Vagina (tissue), 2 donors: ENCODE measurements at regions of chr6 and their contacts with region 1.

Region 1: DNA sequence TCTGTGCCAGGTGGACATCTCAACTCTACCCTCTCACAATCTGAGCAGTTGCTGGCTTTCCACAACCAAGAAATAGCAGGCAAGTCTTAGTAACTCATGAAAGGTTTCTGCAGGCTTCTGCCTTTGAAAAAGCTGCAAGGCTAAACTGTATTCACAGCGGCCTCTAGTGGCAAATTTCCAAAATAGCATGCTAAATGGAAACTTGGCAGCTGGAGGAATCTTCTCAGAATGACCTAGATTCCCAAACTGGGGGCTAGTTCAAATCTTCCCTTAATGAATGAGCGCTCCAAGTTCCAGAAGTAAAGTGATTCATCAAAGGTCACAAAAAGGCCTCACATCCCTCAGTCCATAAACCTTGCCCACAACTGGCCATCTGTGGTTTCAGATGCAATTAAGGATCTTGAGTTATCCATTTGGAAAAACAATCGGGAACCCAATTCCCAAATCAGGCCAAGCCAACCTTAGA is 11.9 kb upstream of the CPNE5 start:
- DNase-seq: no peak
- H3K4me3 ChIP-seq: no peak overlapping the region
- H3K27ac ChIP-seq: peak overlapping the region; percentile 60
- H3K4me1 ChIP-seq: peaks cover 45% of the 10 kb centered on the region
- H3K27me3 ChIP-seq: no peaks in the 10 kb centered on the region
- CTCF ChIP-seq: peak; percentile 56 to 71 (median 66)
- POLR2A ChIP-seq: no peak

Region 2: GRCh38 chr6:36623547-36624459 is 227.4 kb before region 1 on chr6:
- intact Hi-C with region 1: loop called (anchors 5 kb)
- DNase-seq: peak in 1 of 2 donors; percentile 92
- H3K4me3 ChIP-seq: no peak overlapping the region
- H3K27ac ChIP-seq: peak overlapping the region; percentile 60
- H3K4me1 ChIP-seq: peaks cover 41% of the 10 kb centered on the region
- H3K27me3 ChIP-seq: no peaks in the 10 kb centered on the region
- CTCF ChIP-seq: peak; percentile 54 to 86 (median 74)
- POLR2A ChIP-seq: no peak